Activated CD4-positive, alpha-beta T cell treated with anti-CD3 and anti-CD28 coated beads for 36 hours (primary cell): ENCODE measurements at regions of chr5 and their contacts with region 1.

Region 1: DNA sequence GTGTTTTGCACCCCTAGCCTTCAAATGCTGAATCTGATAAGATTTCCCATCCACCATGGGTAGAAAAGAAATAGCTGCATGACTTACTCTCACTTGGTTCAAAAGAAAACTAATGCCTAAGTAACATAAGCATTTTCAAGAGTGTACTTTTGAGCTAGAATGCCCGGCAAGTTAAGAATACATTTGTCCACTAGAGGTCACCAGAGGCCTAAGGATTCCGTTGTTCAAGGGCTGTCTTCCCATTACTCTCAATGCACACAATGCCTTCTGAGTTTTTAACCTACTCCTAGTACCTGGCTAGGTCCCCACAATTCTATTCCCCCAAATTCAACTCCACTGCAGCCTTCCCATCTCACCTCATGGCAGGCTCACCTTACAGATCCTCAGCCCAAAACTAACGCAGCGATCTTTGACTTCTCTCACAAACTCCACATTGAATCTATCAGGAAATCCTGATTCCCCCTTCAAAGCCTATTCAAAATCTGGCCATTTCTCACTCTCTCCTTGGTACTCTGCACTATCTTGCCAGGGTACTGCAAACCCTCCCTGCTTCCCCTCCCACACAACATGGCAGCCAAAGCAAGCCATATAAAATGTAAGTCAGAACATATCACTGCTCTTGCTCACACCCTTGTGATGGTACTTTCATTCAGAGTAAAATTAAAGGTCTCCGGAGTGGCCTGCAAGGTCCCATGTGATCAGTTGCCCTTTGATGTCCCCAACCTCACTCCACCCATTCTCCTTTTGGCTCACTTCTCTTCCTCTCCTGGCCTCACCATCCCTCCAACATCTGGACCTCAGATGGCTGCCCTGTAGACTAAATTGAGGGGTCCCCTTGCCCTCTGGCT is 13.4 kb downstream of the OXCT1 start:
- DNase-seq: peak; percentile 59
- ATAC-seq: peak; percentile 67
- H3K4me3 Mint-ChIP-seq: no peak overlapping the region
- H3K27ac Mint-ChIP-seq: no peak overlapping the region
- H3K4me1 Mint-ChIP-seq: peaks cover 44% of the 10 kb centered on the region
- H3K27me3 Mint-ChIP-seq: no peaks in the 10 kb centered on the region

Region 2: GRCh38 chr5:41482715-41483114 is 374.2 kb before region 1 on chr5:
- CTCF ChIA-PET with region 1: no interaction called
- POLR2A ChIA-PET with region 1: no interaction called
- intact Hi-C with region 1: no loop called
- DNase-seq: no peak
- ATAC-seq: no peak
- H3K4me3 Mint-ChIP-seq: no peak overlapping the region
- H3K27ac Mint-ChIP-seq: no peak overlapping the region
- H3K4me1 Mint-ChIP-seq: no peaks in the 10 kb centered on the region
- H3K27me3 Mint-ChIP-seq: peaks cover 3% of the 10 kb centered on the region

Region 3: GRCh38 chr5:41843456-41844370 is 13.2 kb before region 1 on chr5:
- CTCF ChIA-PET with region 1: interaction called, 32 read pairs
- POLR2A ChIA-PET with region 1: no interaction called
- intact Hi-C with region 1: no loop called
- DNase-seq: peak; percentile 44
- ATAC-seq: peak; percentile 66
- H3K4me3 Mint-ChIP-seq: no peak overlapping the region
- H3K27ac Mint-ChIP-seq: no peak overlapping the region
- H3K4me1 Mint-ChIP-seq: peaks cover 5% of the 10 kb centered on the region
- H3K27me3 Mint-ChIP-seq: no peaks in the 10 kb centered on the region

Region 4: DNA sequence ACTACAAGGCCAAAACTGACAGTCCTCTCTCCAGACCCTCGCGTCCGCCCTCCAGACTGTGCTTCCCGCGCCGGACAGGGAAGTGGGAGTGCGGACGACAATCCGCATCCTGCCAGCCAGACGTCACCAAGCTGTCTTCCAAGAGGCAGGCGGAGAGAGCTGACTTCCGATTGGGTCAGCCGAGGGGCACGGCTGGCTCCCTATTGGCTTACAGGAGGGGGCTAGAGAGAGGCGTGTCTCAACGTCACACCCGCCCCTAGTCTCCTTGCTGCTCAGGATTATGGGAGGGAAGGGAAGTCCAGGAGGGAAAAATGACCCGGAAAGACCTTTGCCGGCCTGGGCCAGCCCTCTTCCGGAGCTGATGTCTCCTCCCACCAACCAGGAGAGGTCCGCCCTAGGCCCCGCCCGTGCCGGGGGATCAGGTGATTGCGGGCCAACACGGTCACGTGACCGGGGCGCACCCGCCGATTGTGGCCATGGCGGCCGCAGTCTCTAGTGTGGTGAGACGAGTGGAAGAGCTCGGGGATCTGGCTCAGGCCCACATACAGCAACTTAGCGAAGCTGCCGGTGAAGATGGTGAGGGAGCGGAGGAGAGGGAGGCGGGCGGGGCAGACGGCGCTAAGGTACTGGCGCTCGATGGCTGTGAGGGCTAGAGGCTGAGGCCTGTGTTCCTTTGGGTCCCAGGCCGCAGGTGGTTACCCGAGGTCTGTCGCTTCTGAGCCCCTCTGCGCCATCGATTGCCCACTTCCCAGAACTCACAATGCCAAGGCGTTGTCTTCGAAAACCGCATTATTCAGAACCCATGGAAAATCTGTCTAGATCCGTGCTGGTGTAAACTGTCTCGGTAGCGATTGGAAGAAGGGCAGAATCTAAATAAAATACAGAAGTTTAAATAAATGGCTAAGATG is 47.3 kb after region 1 on chr5 and contains the start of gene RIMOC1:
- CTCF ChIA-PET with region 1: interaction called, 11 read pairs
- POLR2A ChIA-PET with region 1: no interaction called
- intact Hi-C with region 1: loop called (anchors 1 to 2 kb)
- DNase-seq: peak; percentile 98
- ATAC-seq: peak; percentile 97
- H3K4me3 Mint-ChIP-seq: peak within 1 kb of the TSS; percentile 91
- H3K27ac Mint-ChIP-seq: peak within 1 kb of the TSS; percentile 98
- H3K4me1 Mint-ChIP-seq: peaks cover 47% of the 10 kb centered on the region
- H3K27me3 Mint-ChIP-seq: no peaks in the 10 kb centered on the region
- total RNA-seq, gene RIMOC1: 25.4 to 26.7 TPM

Region 5: GRCh38 chr5:42005561-42006153 is 148.8 kb after region 1 on chr5:
- CTCF ChIA-PET with region 1: interaction called, 8 read pairs
- POLR2A ChIA-PET with region 1: no interaction called
- intact Hi-C with region 1: loop called in 1 of 2 experiments (anchors 1 kb)
- DNase-seq: no peak
- ATAC-seq: no peak
- H3K4me3 Mint-ChIP-seq: no peak overlapping the region
- H3K27ac Mint-ChIP-seq: no peak overlapping the region
- H3K4me1 Mint-ChIP-seq: no peaks in the 10 kb centered on the region
- H3K27me3 Mint-ChIP-seq: peaks cover 3% of the 10 kb centered on the region

Region 6: DNA sequence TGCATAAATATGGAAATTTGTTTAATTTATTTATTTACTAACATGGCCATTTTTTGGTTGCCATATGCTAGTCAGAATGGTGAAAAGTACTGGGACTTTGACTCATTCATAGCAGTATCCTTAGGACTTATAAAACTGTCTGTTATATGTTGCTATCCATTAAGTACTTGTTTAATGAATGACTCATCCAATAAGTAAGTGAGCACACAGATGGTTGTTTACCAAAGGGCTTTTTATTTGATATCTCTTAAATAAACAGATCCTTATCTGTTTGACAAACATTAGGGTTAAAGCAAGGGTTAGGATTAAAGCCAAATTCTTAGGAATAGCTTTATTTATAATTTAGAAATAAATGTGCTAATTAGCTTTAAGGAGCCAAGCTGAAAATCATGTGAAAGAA is 251.6 kb after region 1 on chr5:
- CTCF ChIA-PET with region 1: no interaction called
- POLR2A ChIA-PET with region 1: no interaction called
- intact Hi-C with region 1: no loop called
- DNase-seq: no peak
- ATAC-seq: no peak
- H3K4me3 Mint-ChIP-seq: no peak overlapping the region
- H3K27ac Mint-ChIP-seq: no peak overlapping the region
- H3K4me1 Mint-ChIP-seq: no peaks in the 10 kb centered on the region
- H3K27me3 Mint-ChIP-seq: peaks cover 6% of the 10 kb centered on the region

Region 7: DNA sequence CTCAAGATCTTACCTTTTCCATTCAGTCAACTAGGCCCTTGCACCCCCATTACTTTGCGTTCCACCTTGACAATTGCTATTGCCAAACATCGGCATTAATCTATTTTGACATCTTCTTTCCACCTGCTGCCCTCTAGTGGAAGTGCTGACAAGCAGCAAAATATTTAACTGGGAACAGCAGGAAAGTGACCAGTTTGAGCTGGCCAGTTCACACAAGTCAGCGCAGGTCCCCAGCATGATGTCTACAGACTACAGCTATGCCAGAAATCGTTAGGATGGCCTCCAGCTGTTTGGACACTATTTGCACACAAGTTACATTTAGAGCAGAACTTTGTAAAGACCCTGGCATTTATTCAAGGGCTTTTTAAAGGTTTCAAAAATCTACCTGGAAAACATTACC is 726.5 kb after region 1 on chr5:
- CTCF ChIA-PET with region 1: interaction called, 3 read pairs
- POLR2A ChIA-PET with region 1: no interaction called
- intact Hi-C with region 1: loop called in 1 of 2 experiments (anchors 2 kb)
- DNase-seq: peak; percentile 52
- ATAC-seq: no peak
- H3K4me3 Mint-ChIP-seq: no peak overlapping the region
- H3K27ac Mint-ChIP-seq: no peak overlapping the region
- H3K4me1 Mint-ChIP-seq: no peaks in the 10 kb centered on the region
- H3K27me3 Mint-ChIP-seq: peaks cover 10% of the 10 kb centered on the region